Psoas muscle (tissue), 8 donors: ENCODE measurements at regions of chr2 and their contacts with region 1.

Region 1: GRCh38 chr2:191679818-191680600 is 2.1 kb downstream of the NABP1 start:
- DNase-seq: no peak
- ATAC-seq: peak in 1 of 4 donors; percentile 37
- H3K4me3 ChIP-seq: peak overlapping the region; percentile 80
- H3K27ac ChIP-seq: peak overlapping the region; percentile 96
- H3K4me1 ChIP-seq: peaks cover 22% of the 10 kb centered on the region
- H3K27me3 ChIP-seq: no peaks in the 10 kb centered on the region
- CTCF ChIP-seq: no peak

Region 2: DNA sequence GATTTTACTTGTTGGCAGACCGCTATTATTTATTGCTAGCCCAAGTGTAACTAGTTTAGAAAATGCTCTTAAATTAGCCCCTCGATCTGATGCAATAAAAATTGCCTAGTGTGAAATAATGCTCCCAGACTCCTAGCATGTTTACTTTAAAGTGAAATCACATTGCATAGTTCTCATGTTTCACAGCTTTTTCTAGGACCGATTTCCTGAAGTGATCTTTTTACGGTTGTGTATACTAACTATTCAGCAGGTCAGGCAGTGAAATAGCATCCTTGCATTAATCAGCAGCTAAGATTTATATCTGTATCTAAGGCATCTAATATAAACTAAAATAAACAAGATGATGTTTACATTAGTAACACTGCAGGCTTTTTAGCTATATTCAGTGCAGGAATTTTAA is 1843.4 kb before region 1 on chr2:
- intact Hi-C with region 1: loop called in 1 of 2 experiments (anchors 5 kb)
- DNase-seq: no peak
- ATAC-seq: peak in 3 of 4 donors; percentile 75 to 88 (median 83)
- H3K4me3 ChIP-seq: peak overlapping the region; percentile 21
- H3K27ac ChIP-seq: peak overlapping the region; percentile 77
- H3K4me1 ChIP-seq: peaks cover 28% of the 10 kb centered on the region
- H3K27me3 ChIP-seq: no peaks in the 10 kb centered on the region
- CTCF ChIP-seq: no peak

Region 3: DNA sequence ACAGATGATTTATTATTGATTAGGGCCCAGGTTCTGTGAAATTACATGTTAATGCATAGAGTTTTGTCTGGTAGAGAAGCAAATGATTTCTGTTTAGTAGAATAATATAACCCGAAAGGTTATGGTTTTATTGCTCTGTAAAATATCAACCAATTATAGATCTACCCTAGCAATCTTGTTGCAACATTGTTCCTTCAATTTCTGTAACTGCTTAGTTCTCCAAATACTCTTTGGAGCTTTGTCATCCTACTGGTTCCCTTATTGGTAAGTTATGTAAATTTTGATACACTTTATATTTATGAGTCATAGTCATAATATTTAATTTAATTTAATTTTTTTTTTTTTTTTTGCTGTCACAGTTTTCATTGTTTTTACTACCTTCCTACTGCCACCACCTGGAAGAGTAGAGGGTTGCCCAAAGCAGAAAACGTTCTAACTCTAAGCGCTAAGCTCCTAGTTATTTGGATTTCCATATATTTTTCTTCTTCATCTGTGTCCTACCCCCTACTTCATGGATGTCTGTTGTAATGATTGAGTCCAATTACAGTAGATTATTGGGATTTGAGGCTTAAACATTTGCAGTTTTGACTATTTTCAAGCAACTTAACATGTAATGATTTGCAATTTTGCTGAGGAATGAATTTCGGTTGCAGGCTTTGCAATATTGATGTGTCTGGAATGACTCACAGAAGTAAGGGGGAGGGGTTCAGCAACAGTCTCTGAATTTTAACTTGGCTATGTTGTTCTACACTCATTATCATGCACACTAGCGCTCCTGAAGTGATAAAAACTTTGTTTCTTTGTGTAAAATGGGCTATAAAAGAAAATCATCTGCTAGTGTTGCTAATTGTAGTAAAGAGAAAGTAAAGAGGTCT is 49.0 kb after region 1 on chr2:
- intact Hi-C with region 1: no loop called
- DNase-seq: no peak
- ATAC-seq: no peak
- H3K4me3 ChIP-seq: no peak overlapping the region
- H3K27ac ChIP-seq: no peak overlapping the region
- H3K4me1 ChIP-seq: no peaks in the 10 kb centered on the region
- H3K27me3 ChIP-seq: peaks cover 0 to 6% (median 3%) of the 10 kb centered on the region in 3 donors
- CTCF ChIP-seq: no peak